GM12878 (cell line): ENCODE measurements at regions of chr5 and their contacts with region 1.

Region 1: DNA sequence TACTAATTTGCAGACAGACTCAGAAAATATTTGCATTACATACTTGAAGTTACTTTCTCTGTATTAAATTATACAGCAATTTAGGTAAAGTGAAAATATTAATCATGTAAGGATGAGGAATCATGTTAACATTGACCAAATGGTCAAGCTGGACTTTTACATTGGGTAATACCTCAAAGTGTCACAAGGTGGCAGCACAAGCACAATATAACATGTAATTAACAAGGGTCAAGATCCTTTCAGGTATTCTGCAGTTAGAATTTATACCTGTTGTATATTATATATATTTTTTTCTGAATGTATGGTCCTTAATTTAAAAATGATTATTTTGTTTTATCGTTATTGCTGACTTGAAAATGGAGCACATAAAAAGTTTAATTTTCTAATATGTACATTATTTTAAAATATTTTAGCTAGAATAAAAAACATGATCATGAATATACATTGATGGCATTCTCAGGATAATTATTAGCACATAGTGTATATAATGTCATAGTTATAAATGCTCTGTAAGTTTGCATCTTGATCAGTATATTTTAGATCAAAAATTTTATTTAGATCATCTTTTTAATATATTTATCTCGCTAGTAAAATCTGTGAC is 8.6 kb downstream of the HAPLN1 start:
- DNase-seq: no peak
- ATAC-seq: peak; percentile 74
- H3K4me3 ChIP-seq: no peak overlapping the region
- H3K27ac ChIP-seq: no peak overlapping the region
- H3K4me1 ChIP-seq: no peaks in the 10 kb centered on the region
- H3K27me3 ChIP-seq: peaks cover 2 to 3% of the 10 kb centered on the region in 2 experiments; a peak in 3 of 4 replicates
- CTCF ChIP-seq: peak; percentile 54 to 70 (median 65); a peak in 5 of 6 replicates
- EP300 ChIP-seq: no peak
- POLR2A ChIP-seq: no peak
- RAD21 ChIP-seq: peak; percentile 70

Region 2: GRCh38 chr5:83701886-83702285 is 10.2 kb before region 1 on chr5:
- CTCF ChIA-PET with region 1: interaction called, 15 read pairs
- POLR2A ChIA-PET with region 1: no interaction called
- RAD21 ChIA-PET with region 1: no interaction called
- SMC1A ChIA-PET with region 1: interaction called, 7 read pairs
- in situ Hi-C with region 1: no loop called
- intact Hi-C with region 1: no loop called
- DNase-seq: no peak
- ATAC-seq: no peak
- H3K4me3 ChIP-seq: no peak overlapping the region
- H3K27ac ChIP-seq: no peak overlapping the region
- H3K4me1 ChIP-seq: no peaks in the 10 kb centered on the region
- H3K27me3 ChIP-seq: no peaks in the 10 kb centered on the region
- CTCF ChIP-seq: no peak
- EP300 ChIP-seq: no peak
- POLR2A ChIP-seq: no peak
- RAD21 ChIP-seq: no peak

Region 3: GRCh38 chr5:83731638-83732037 is 19.5 kb after region 1 on chr5:
- CTCF ChIA-PET with region 1: interaction called, 10 read pairs
- POLR2A ChIA-PET with region 1: no interaction called
- RAD21 ChIA-PET with region 1: interaction called, 4 read pairs
- SMC1A ChIA-PET with region 1: no interaction called
- in situ Hi-C with region 1: no loop called
- intact Hi-C with region 1: no loop called
- DNase-seq: no peak
- ATAC-seq: peak; percentile 64
- H3K4me3 ChIP-seq: no peak overlapping the region
- H3K27ac ChIP-seq: no peak overlapping the region
- H3K4me1 ChIP-seq: no peaks in the 10 kb centered on the region
- H3K27me3 ChIP-seq: no peaks in the 10 kb centered on the region
- CTCF ChIP-seq: no peak
- EP300 ChIP-seq: no peak
- POLR2A ChIP-seq: no peak
- RAD21 ChIP-seq: no peak